HEK293 (cell line): ENCODE measurements at regions of chr6 and their contacts with region 1.

Region 1: GRCh38 chr6:122184401-122184827 is 215.0 kb upstream of the HSF2 start:
- H3K4me3 ChIP-seq: no peak overlapping the region
- H3K27ac ChIP-seq: no peak overlapping the region
- H3K4me1 ChIP-seq: no peaks in the 10 kb centered on the region
- CTCF ChIP-seq: no peak; the same call in 1 of the 2 replicates

Region 2: GRCh38 chr6:121430514-121431460 is 753.6 kb before region 1 on chr6:
- CTCF ChIA-PET with region 1: interaction called, 18 read pairs
- POLR2A ChIA-PET with region 1: no interaction called
- H3K4me3 ChIP-seq: no peak overlapping the region
- H3K27ac ChIP-seq: no peak overlapping the region
- H3K4me1 ChIP-seq: no peaks in the 10 kb centered on the region
- CTCF ChIP-seq: 0 out of 2 replicates have a peak, but pooled peaks have one; percentile 35